ENCODE measurements at regions of chr10 and their contacts with region 1.

Region 1: DNA sequence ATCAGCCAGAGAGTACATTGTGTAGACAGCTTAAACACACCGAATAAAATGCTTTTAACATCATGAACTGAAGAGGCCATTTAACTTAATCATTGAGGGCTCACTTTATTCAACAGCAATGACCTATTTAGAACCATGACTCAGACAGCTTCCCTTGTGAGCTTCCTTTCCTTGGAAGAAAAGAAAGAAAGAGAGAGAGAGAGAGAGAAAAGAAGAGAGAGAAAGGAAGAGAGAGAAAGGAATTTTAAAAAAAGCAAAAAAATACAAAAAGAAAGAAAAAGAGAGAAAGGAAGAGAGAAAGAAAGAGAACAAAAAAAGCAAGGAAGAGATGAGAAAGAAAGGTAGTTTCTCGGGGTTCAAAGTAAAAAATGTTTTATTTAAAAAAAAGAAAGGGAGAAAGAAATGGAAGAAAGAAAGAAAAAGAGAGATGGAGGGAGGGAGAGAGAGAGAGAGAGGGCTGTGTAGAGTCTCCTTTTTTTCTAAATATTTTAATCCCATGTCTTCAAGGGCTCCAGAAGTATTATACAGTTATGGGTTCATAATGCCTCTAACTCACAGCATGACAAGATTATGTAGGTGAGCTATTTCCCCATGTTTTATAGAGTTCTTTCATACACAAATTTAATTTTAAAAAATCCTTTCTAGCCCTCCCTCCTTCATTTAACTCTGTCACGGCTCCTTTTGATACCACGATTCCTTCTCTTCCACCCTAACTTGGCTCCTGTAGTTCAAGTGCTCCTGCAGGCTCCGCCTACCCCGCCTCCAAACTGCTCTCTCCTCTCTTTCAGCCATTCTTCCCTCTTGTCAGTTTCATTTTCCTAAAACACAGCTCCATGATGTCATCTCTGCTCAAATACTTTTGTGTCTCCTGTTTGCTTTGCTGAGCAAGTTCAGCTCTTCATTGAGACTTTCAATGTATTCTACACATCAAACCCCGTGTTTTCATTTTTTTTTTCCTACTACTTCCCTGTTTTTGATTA is 85.5 kb downstream of the PRTFDC1 start:
- DNase-seq: peak; percentile 52 to 58
- ATAC-seq: peak in 7 of 8 donors; percentile 87 to 95 (median 90)
- H3K4me3 ChIP-seq: peak overlapping the region in 5 of 10 donors; percentile 5 to 23 (median 18)
- H3K27ac ChIP-seq: peak overlapping the region in 9 of 10 donors; percentile 12 to 85 (median 61)
- H3K4me1 ChIP-seq: peaks cover 0 to 35% (median 0%) of the 10 kb centered on the region in 9 donors
- H3K27me3 ChIP-seq: no peaks in the 10 kb centered on the region
- CTCF ChIP-seq: no peak

Region 2: GRCh38 chr10:24826019-24826418 is 40.9 kb before region 1 on chr10:
- intact Hi-C with region 1: no loop called
- DNase-seq: no peak
- ATAC-seq: peak in 4 of 8 donors; percentile 37 to 74 (median 53)
- H3K4me3 ChIP-seq: peak overlapping the region in 1 of 10 donors; percentile 3
- H3K27ac ChIP-seq: peak overlapping the region in 2 of 10 donors; percentile 16 to 29
- H3K4me1 ChIP-seq: peaks cover 0 to 14% (median 7%) of the 10 kb centered on the region in 9 donors
- H3K27me3 ChIP-seq: no peaks in the 10 kb centered on the region
- CTCF ChIP-seq: no peak

Region 3: DNA sequence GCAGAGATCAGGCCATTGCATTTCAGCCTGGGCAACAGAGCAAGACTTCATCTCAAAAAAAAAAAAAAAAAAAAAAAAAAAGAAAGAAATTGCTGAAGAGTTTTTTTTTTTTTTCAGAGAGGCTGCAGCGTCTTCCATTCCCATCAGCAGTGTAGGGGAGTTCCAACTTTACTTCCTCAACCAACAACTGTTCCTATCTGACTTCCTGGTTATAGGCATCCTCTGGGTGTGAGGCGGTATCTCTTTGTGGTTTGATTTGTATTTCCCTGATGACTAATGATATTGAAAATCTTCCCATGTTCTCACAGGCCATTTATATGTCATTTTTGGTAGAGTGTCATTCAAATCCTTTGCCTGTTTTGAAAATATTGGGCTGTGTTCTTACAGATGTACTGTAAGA is 45.3 kb after region 1 on chr10:
- intact Hi-C with region 1: loop called in 1 of 10 experiments (anchors 5 kb)
- DNase-seq: no peak
- ATAC-seq: peak in 6 of 8 donors; percentile 47 to 82 (median 66)
- H3K4me3 ChIP-seq: no peak overlapping the region
- H3K27ac ChIP-seq: peak overlapping the region in 2 of 10 donors; percentile 31 to 52
- H3K4me1 ChIP-seq: peaks cover 0 to 47% (median 3%) of the 10 kb centered on the region in 9 donors
- H3K27me3 ChIP-seq: no peaks in the 10 kb centered on the region
- CTCF ChIP-seq: no peak

Region 4: DNA sequence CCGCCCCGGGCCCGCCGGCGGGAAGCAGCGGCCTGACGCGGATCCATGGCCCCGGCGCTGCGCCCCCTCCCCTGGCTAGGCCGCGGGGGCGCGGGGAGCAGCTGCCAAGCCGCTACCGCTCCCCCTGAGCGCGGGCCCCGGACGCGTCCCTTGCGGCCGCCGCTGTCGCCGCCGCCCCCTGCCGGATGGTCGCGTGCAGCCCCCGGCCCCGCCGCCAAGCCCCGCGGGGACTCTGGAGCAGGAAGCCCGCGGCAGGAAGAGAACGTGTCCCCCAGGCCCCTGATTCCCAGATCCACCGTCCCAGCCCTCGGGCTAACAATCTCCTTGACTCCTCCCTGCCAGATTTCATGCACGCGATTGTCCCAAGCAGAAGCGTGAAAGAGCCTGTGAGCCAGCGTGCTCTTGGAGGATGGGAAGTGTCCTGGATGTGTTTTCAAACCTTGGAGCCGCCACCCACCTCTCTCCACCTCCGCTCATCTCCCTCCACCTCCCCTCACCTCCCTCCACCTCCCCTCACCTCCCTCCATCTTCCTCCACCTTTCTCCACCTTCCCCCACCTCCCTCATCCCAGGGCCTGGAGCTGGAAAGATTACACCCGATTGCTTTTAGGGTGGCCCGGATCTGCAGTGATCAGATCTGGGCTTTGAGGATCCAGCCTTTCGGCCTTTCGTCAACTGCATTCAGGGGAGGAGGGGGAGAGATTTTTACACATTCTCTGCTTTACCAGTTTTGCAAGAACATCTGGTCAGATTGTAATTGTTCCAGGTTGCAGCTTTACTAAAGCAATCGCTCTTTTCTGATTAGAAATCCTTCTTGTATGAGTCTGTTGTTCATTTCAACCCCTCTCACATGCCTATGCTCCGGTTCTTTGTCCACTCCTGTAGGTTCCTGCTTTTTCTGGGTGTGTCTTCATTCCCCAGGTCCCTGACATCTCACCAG is 86.1 kb after region 1 on chr10:
- intact Hi-C with region 1: loop called in 1 of 10 experiments (anchors 10 kb)
- DNase-seq: peak; percentile 54 to 65
- ATAC-seq: peak; percentile 41 to 79 (median 64)
- H3K4me3 ChIP-seq: peak overlapping the region; percentile 51 to 73 (median 64)
- H3K27ac ChIP-seq: peak overlapping the region; percentile 55 to 92 (median 86)
- H3K4me1 ChIP-seq: peaks cover 0 to 30% (median 13%) of the 10 kb centered on the region in 9 donors
- H3K27me3 ChIP-seq: peaks cover 0 to 6% (median 0%) of the 10 kb centered on the region in 7 donors
- CTCF ChIP-seq: peak in 8 of 9 donors; percentile 19 to 57 (median 44)